ENCODE measurements at regions of chr17 and their contacts with region 1.

Region 1: GRCh38 chr17:28252436-28252835 is 66.6 kb upstream of the TMEM97 start:
- DNase-seq: no peak
- H3K4me3 Mint-ChIP-seq: peak overlapping the region; percentile 72
- H3K27ac Mint-ChIP-seq: no peak overlapping the region
- H3K4me1 Mint-ChIP-seq: peaks cover 13% of the 10 kb centered on the region
- H3K27me3 Mint-ChIP-seq: peaks cover 22% of the 10 kb centered on the region
- CTCF ChIP-seq: no peak

Region 2: DNA sequence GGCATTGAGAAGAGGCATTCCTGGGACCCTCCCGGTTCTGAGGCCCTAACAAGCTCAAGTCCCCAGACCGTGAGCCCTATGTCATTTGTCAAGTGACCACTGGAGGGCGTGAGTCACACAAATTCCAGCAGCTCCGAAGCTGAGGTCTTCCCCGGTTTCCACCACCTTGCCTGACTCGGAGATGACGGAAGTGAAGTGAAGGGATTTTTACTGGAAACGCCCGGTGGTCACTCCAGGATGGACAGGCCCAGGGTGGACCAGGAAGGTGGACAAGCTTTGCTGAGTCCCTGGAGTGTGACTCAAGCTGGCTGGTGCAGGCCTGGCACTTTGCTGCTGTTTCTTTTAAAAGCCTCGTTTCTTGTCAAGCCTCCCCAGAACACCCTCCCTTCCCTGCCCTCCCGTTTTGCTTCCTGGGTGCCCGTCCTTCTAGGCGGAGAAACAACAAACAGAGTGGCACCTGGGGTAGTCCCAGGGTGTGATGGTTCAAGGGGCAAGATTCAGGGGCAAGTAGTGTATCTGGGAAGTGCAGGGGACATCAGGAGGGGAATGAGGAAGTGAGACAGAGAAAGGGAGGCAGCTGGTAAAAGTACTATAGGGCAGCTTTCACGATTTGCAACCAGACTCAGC is 446.8 kb before region 1 on chr17:
- CTCF ChIA-PET with region 1: interaction called, 7 read pairs
- intact Hi-C with region 1: loop called (anchors 10 kb)
- DNase-seq: peak; percentile 85
- H3K4me3 Mint-ChIP-seq: peak overlapping the region; percentile 55
- H3K27ac Mint-ChIP-seq: peak overlapping the region; percentile 65
- H3K4me1 Mint-ChIP-seq: peaks cover 17% of the 10 kb centered on the region
- H3K27me3 Mint-ChIP-seq: peaks cover 37% of the 10 kb centered on the region
- CTCF ChIP-seq: peak; percentile 73

Region 3: GRCh38 chr17:28228126-28228857 is 24.1 kb before region 1 on chr17:
- CTCF ChIA-PET with region 1: interaction called, 11 read pairs
- intact Hi-C with region 1: no loop called
- DNase-seq: no peak
- H3K4me3 Mint-ChIP-seq: peak overlapping the region; percentile 85
- H3K27ac Mint-ChIP-seq: peak overlapping the region; percentile 68
- H3K4me1 Mint-ChIP-seq: peaks cover 14% of the 10 kb centered on the region
- H3K27me3 Mint-ChIP-seq: no peaks in the 10 kb centered on the region
- CTCF ChIP-seq: no peak

Region 4: GRCh38 chr17:28295677-28296578 is 43.5 kb after region 1 on chr17:
- CTCF ChIA-PET with region 1: no interaction called
- intact Hi-C with region 1: no loop called
- DNase-seq: no peak
- H3K4me3 Mint-ChIP-seq: no peak overlapping the region
- H3K27ac Mint-ChIP-seq: no peak overlapping the region
- H3K4me1 Mint-ChIP-seq: no peaks in the 10 kb centered on the region
- H3K27me3 Mint-ChIP-seq: no peaks in the 10 kb centered on the region
- CTCF ChIP-seq: no peak

Region 5: DNA sequence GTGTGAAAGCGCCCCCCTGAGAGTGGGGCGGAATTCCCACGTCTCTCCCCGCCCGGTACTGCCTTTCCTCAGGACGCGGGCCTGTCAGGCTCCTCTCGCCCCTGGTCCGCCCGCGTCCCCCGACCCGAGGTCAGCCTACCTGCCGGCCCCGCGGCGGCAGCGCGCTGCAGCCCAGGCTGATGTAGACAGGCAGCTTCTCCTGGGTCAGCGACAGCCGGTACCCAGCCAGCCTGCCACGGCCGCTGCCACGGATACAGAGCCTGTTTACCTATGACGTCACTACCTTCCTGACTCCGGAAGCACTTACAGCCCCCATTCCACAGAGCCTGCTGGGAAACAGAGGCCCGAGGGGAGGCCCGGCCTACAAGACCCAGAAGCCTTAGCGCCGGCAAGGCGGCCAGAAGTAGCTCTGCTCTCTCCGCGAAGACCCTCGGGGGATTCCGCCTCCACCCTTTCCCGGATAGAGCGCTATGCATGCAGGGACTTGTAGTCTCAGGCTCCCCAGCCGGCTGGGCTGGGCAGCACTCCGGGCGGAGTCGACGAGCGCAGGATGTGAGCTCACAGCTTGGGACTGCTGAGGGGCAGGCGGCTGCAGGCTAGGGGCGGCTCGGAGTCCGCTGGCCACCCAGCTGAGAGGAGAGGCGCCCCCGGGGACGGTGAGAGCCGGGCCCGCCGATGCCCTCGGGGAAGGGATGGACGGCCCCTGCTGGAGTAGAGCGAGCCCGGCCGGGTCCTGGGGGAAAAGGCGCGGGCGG is 82.9 kb after region 1 on chr17 and contains the starts of genes IFT20 and TNFAIP1:
- CTCF ChIA-PET with region 1: interaction called, 10 read pairs
- intact Hi-C with region 1: no loop called
- DNase-seq: peak; percentile 98
- H3K4me3 Mint-ChIP-seq: peak within 1 kb of the TSS; percentile 93
- H3K27ac Mint-ChIP-seq: peak within 1 kb of the TSS; percentile 89
- H3K4me1 Mint-ChIP-seq: peaks cover 40% of the 10 kb centered on the region
- H3K27me3 Mint-ChIP-seq: no peaks in the 10 kb centered on the region
- CTCF ChIP-seq: no peak
- total RNA-seq, gene IFT20: 31.9 and 32.1 TPM in 2 replicates
- total RNA-seq, gene TNFAIP1: 45.9 and 49.4 TPM in 2 replicates